ENCODE measurements at regions of chr15 and their contacts with region 1.

Region 1: DNA sequence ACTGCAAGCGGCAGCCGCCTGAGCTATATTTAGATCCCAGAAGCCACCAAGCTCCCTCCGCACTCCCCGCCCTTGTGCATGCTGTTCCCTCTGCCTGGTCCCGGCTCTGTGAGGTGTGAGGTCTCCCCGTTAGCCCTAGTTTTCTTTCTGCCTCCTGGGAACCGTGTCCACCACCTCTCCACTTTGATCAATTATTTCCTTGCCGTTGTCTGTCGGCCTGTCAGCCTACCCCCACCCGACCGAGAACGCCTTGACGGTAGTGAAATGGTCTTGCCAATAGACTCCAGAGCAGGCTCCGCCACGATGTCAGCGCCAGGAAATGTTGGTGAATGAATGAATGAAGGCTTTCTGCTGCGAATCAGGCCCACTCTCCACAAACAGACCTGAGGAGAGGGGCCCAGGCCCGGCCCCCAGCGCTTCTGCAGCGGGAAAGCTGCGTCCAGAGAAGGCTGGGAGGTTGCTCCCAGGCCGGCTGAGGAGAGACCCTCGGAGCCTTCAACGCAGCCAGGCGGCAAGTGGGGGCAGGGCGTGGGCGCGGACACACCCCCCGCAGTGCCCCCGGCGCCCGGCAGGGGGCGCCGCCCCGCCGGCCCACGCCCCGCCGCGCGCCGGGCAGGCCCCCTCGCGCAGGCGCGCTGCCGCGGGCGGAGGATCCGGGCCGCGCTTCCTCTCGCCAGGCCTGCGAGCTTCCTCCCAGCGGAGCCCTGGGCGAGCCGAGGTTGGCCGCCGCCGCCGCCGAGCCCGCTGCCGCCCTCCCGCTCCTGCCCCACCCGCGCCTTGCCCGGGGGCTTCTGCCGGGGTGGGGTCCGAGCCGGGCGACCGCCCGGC is at the start of gene CSK:
- DNase-seq: no peak
- H3K4me3 ChIP-seq: peak within 1 kb of the TSS; percentile 73 to 95 (median 86)
- H3K27ac ChIP-seq: peak within 1 kb of the TSS; percentile 80 to 94 (median 84)
- H3K4me1 ChIP-seq: peaks cover 56 to 74% (median 72%) of the 10 kb centered on the region in 4 donors
- H3K27me3 ChIP-seq: no peaks in the 10 kb centered on the region
- CTCF ChIP-seq: peak; percentile 64 to 80 (median 64)
- EP300 ChIP-seq: no peak
- POLR2A ChIP-seq: no peak
- total RNA-seq, gene CSK: 14.0 to 28.7 (median 21.9) TPM

Region 2: GRCh38 chr15:74937596-74938296 is 156.1 kb after region 1 on chr15 and contains the start of gene COX5A:
- intact Hi-C with region 1: loop called (anchors 5 kb)
- DNase-seq: peak; percentile 95
- H3K4me3 ChIP-seq: peak within 1 kb of the TSS; percentile 78 to 99 (median 82)
- H3K27ac ChIP-seq: peak within 1 kb of the TSS; percentile 94 to 99 (median 94)
- H3K4me1 ChIP-seq: peaks cover 25 to 48% (median 42%) of the 10 kb centered on the region in 4 donors
- H3K27me3 ChIP-seq: no peaks in the 10 kb centered on the region
- CTCF ChIP-seq: peak in 1 of 3 experiments; percentile 17
- EP300 ChIP-seq: no peak
- POLR2A ChIP-seq: peak; percentile 62
- total RNA-seq, gene COX5A: 58.6 to 86.2 (median 75.5) TPM

Measured in esophagus muscularis mucosa (tissue), 4 donors.